ENCODE measurements at regions of chr11 and their contacts with region 1.

Region 1: DNA sequence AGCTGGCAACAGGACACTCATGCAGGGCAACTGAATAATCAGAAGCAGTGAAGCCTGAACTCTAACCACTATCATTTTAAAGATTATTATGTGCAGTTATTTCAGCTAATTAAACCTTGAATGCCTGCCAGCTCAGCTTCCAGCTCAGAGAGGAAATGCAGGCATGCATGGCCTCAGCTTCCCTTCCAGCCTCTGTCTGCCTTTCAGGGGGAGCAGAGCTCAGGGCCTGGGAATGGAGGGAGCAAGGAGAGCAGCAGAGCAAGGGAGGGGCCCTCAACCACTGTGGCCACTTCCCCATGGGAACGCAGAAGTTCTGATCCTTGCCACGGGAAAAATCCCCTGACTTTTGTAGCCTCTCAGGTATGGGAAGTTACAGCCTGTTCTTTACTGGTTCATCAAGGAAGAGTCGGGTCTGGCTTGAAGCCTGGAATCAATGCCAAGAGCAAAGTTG is 32.5 kb upstream of the APLNR start:
- DNase-seq: no peak
- ATAC-seq: no peak
- H3K4me3 ChIP-seq: no peak overlapping the region
- H3K27ac ChIP-seq: no peak overlapping the region
- H3K4me1 ChIP-seq: no peaks in the 10 kb centered on the region
- H3K27me3 ChIP-seq: no peaks in the 10 kb centered on the region
- CTCF ChIP-seq: no peak
- POLR2A ChIP-seq: no peak
- RAD21 ChIP-seq: no peak

Region 2: GRCh38 chr11:57205041-57205671 is 64.4 kb before region 1 on chr11:
- CTCF ChIA-PET with region 1: no interaction called
- POLR2A ChIA-PET with region 1: no interaction called
- RAD21 ChIA-PET with region 1: no interaction called
- intact Hi-C with region 1: loop called (anchors 10 kb)
- DNase-seq: no peak
- ATAC-seq: peak; percentile 61; the same call in 1 of the 2 replicates
- H3K4me3 ChIP-seq: no peak overlapping the region
- H3K27ac ChIP-seq: no peak overlapping the region
- H3K4me1 ChIP-seq: no peaks in the 10 kb centered on the region
- H3K27me3 ChIP-seq: peaks cover 44% of the 10 kb centered on the region
- CTCF ChIP-seq: no peak
- POLR2A ChIP-seq: no peak
- RAD21 ChIP-seq: no peak

Region 3: DNA sequence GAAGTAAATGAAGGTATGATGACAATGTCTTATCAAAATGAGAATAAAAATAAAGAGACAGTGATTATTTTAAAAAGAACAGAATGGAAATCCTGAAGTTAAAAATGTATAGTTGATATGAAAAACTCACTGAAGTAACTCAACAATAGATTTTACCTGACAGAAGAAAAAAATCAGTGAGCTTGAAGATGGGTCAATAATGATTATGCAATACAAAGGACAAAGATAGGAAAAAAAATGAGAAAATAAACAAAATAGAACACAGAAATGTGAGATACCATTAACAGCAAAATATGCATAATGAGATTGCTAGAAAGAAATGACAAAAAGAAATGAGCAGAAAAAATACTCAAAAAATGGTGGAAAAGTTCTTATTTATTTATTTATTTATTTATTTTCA is 13.5 kb before region 1 on chr11:
- CTCF ChIA-PET with region 1: no interaction called
- POLR2A ChIA-PET with region 1: no interaction called
- RAD21 ChIA-PET with region 1: no interaction called
- intact Hi-C with region 1: no loop called
- DNase-seq: no peak
- ATAC-seq: no peak
- H3K4me3 ChIP-seq: no peak overlapping the region
- H3K27ac ChIP-seq: no peak overlapping the region
- H3K4me1 ChIP-seq: no peaks in the 10 kb centered on the region
- H3K27me3 ChIP-seq: peaks cover 24% of the 10 kb centered on the region; the same call in 1 of the 2 replicates
- CTCF ChIP-seq: no peak
- POLR2A ChIP-seq: no peak
- RAD21 ChIP-seq: no peak

Measured in HCT116 (cell line).